ENCODE measurements at regions of chr2 and their contacts with region 1.

Region 1: GRCh38 chr2:39996653-39997080 is 217.6 kb upstream of the THUMPD2 start:
- DNase-seq: no peak
- ATAC-seq: no peak
- H3K4me3 ChIP-seq: no peak overlapping the region
- H3K4me3 Mint-ChIP-seq: no peak overlapping the region
- H3K27ac ChIP-seq: no peak overlapping the region
- H3K27ac Mint-ChIP-seq: no peak overlapping the region
- H3K4me1 ChIP-seq: no peaks in the 10 kb centered on the region
- H3K4me1 Mint-ChIP-seq: peaks cover 0 to 29% (median 0%) of the 10 kb centered on the region in 7 donors
- H3K27me3 ChIP-seq: no peaks in the 10 kb centered on the region
- H3K27me3 Mint-ChIP-seq: peaks cover 0 to 14% (median 0%) of the 10 kb centered on the region in 5 donors

Region 2: GRCh38 chr2:39919511-39920306 is 77.0 kb before region 1 on chr2:
- CTCF ChIA-PET with region 1: no interaction called
- POLR2A ChIA-PET with region 1: no interaction called
- intact Hi-C with region 1: loop called in 1 of 2 experiments (anchors 5 kb)
- DNase-seq: peak in 1 of 9 donors; percentile 29
- ATAC-seq: no peak
- H3K4me3 ChIP-seq: no peak overlapping the region
- H3K4me3 Mint-ChIP-seq: peak overlapping the region in 1 of 10 donors; percentile 89
- H3K27ac ChIP-seq: no peak overlapping the region
- H3K27ac Mint-ChIP-seq: peak overlapping the region in 1 of 9 donors; percentile 86
- H3K4me1 ChIP-seq: no peaks in the 10 kb centered on the region
- H3K4me1 Mint-ChIP-seq: peaks cover 0 to 72% (median 0%) of the 10 kb centered on the region in 7 donors
- H3K27me3 ChIP-seq: no peaks in the 10 kb centered on the region
- H3K27me3 Mint-ChIP-seq: peaks cover 0 to 17% (median 11%) of the 10 kb centered on the region in 5 donors

Measured in naive thymus-derived CD4-positive, alpha-beta T cell (primary cell).